ENCODE measurements at regions of chr11 and their contacts with region 1.

Region 1: GRCh38 chr11:73661035-73661628 is 14.8 kb downstream of the PLEKHB1 start:
- DNase-seq: peak; percentile 77
- H3K4me3 ChIP-seq: peak overlapping the region; percentile 16 to 56 (median 39)
- H3K27ac ChIP-seq: no peak overlapping the region
- H3K4me1 ChIP-seq: peaks cover 10% of the 10 kb centered on the region
- H3K27me3 ChIP-seq: no peaks in the 10 kb centered on the region
- CTCF ChIP-seq: peak; percentile 95 to 98

Region 2: GRCh38 chr11:73307323-73308002 is 353.7 kb before region 1 on chr11:
- CTCF ChIA-PET with region 1: no interaction called
- dilution Hi-C with region 1: no loop called
- in situ Hi-C with region 1: no loop called
- intact Hi-C with region 1: loop called (anchors 1 kb)
- DNase-seq: peak; percentile 94
- H3K4me3 ChIP-seq: peak overlapping the region; percentile 54 to 65 (median 57)
- H3K27ac ChIP-seq: peak overlapping the region; percentile 45
- H3K4me1 ChIP-seq: peaks cover 43% of the 10 kb centered on the region
- H3K27me3 ChIP-seq: no peaks in the 10 kb centered on the region
- CTCF ChIP-seq: peak; percentile 69 to 91

Region 3: GRCh38 chr11:73376160-73376802 is 284.9 kb before region 1 on chr11 and contains the start of gene RELT:
- CTCF ChIA-PET with region 1: no interaction called
- dilution Hi-C with region 1: no loop called
- in situ Hi-C with region 1: no loop called
- intact Hi-C with region 1: loop called (anchors 1 kb)
- DNase-seq: peak; percentile 90
- H3K4me3 ChIP-seq: peak within 1 kb of the TSS; percentile 57 to 99 (median 86)
- H3K27ac ChIP-seq: peak within 1 kb of the TSS; percentile 75
- H3K4me1 ChIP-seq: peaks cover 8% of the 10 kb centered on the region
- H3K27me3 ChIP-seq: no peaks in the 10 kb centered on the region
- CTCF ChIP-seq: peak; percentile 74 to 82
- total RNA-seq, gene RELT: 4.5 to 10.2 TPM

Region 4: DNA sequence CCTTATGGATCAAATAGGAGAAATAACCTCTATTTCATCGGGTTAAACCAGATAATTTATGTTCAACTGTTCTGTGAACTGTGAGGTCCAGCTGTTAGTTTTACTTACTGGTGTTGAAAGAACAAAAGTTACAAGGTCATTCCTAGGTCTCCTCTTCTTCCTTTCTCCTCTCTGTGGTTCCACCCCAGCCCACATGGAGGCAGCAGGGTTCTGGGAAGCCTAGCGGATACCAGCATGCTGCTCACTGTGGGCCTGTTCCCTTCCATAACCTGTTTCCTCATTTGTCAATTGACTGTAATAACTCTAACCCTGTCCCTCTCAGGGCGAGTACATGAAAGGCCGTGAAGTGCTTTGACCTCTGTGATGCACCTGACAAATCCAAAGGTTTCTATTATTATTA is 257.1 kb before region 1 on chr11:
- CTCF ChIA-PET with region 1: interaction called, 4 read pairs
- dilution Hi-C with region 1: no loop called
- in situ Hi-C with region 1: no loop called
- intact Hi-C with region 1: loop called (anchors 1 kb)
- DNase-seq: peak; percentile 31
- H3K4me3 ChIP-seq: no peak overlapping the region
- H3K27ac ChIP-seq: no peak overlapping the region
- H3K4me1 ChIP-seq: no peaks in the 10 kb centered on the region
- H3K27me3 ChIP-seq: no peaks in the 10 kb centered on the region
- CTCF ChIP-seq: peak; percentile 54 to 56

Region 5: GRCh38 chr11:73625696-73626318 is 35.3 kb before region 1 on chr11:
- CTCF ChIA-PET with region 1: interaction called, 4 read pairs
- dilution Hi-C with region 1: no loop called
- in situ Hi-C with region 1: no loop called
- intact Hi-C with region 1: loop called (anchors 1 kb)
- DNase-seq: peak; percentile 61
- H3K4me3 ChIP-seq: no peak overlapping the region
- H3K27ac ChIP-seq: no peak overlapping the region
- H3K4me1 ChIP-seq: peaks cover 3% of the 10 kb centered on the region
- H3K27me3 ChIP-seq: no peaks in the 10 kb centered on the region
- CTCF ChIP-seq: peak; percentile 90

Region 6: GRCh38 chr11:73680687-73681086 is 19.6 kb after region 1 on chr11:
- CTCF ChIA-PET with region 1: no interaction called
- dilution Hi-C with region 1: no loop called
- in situ Hi-C with region 1: no loop called
- intact Hi-C with region 1: no loop called
- DNase-seq: no peak
- H3K4me3 ChIP-seq: no peak overlapping the region
- H3K27ac ChIP-seq: no peak overlapping the region
- H3K4me1 ChIP-seq: no peaks in the 10 kb centered on the region
- H3K27me3 ChIP-seq: no peaks in the 10 kb centered on the region
- CTCF ChIP-seq: no peak

Region 7: DNA sequence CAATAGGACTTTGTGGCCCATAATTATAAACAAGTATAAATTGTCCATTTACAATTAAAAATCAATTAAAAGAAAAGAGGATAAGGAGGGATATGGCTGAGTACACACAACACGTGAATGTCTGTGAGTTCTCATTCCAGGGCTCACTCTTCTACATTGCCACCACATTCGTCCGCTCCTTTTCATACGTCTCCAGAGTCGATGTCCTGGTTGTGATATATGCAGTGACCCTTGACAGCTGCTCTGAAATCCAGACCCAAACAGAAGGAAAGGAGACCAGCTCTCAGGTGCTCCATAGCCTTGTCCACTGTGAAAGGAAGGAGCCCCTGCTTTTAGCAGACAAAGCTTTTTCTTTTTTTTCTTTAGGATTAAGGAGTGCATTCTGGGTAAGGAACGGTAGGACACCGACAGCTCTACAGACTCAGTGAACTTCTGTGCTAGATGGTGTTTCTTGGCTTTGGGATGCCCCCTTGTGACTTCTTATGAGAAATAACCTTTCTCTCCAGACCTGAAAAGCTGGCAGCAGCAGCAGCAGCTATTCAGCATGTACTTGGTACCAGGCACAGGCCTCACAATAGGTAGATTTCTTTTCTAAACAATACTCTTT is 270.0 kb after region 1 on chr11:
- CTCF ChIA-PET with region 1: no interaction called
- dilution Hi-C with region 1: no loop called
- in situ Hi-C with region 1: no loop called
- intact Hi-C with region 1: loop called (anchors 10 kb)
- DNase-seq: peak; percentile 68
- H3K4me3 ChIP-seq: no peak overlapping the region
- H3K27ac ChIP-seq: no peak overlapping the region
- H3K4me1 ChIP-seq: no peaks in the 10 kb centered on the region
- H3K27me3 ChIP-seq: no peaks in the 10 kb centered on the region
- CTCF ChIP-seq: peak; percentile 17 to 55

Measured in mammary epithelial cell (primary cell).